ENCODE measurements at regions of chr6 and their contacts with region 1.

Region 1: GRCh38 chr6:143427109-143427817 is 23.2 kb downstream of the ADAT2 start:
- DNase-seq: peak; percentile 76
- CTCF ChIP-seq: peak; percentile 97

Region 2: DNA sequence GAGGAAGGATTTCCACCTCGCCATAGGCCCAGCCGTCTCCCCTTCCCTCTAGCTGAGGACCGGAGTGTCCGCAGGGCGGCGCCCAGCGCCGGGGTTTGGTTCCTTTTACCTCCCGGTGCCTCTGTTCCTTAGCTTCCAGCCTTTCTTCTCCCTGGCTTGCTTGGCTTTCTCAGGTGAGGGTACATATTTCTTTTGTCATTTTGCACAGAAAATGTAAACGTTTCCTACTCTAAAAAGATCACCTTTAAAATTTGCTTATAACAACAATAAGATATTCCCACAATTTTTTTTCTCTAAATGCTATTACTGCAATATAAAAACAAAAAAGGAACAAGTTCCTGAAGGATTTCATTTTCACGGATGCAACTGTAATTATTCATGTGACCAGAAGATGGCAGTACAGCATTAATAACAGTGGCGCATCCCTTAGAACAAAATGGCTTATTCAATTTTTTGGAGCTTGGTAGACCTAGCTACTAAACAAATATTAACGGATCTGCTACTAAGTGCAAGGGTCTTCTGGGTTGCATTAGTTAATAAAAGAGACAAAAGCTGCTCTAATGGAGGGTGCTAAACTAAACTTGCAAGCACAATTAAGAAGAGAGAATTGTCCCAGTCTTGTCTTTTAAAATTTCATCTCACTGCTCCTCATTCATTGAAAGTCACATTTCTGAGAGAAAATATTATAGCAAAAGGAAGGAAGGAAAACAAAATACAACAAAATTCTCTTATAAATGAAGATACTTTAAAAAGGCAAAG is 952.6 kb before region 1 on chr6:
- CTCF ChIA-PET with region 1: interaction called, 43 read pairs
- POLR2A ChIA-PET with region 1: no interaction called
- DNase-seq: peak; percentile 38
- CTCF ChIP-seq: peak; percentile 78

Region 3: DNA sequence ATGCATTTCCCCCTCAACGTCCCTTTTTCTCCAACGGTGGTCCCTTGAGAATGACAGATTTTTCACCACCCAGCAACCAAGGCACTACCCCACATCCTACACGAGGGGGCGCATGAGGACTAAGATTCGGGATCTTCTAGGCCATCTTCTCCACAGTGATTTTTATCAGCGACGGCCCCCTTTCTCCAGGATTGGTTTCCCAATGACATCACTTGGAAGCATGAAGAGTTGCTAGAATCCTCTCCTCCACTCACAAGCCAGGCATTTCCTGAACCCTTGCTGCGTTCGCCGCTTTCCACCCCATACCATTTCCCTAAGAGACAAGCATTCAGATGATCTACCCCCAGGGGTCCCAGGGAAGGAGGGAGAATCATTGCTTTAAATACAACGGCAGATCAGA is 734.3 kb before region 1 on chr6:
- CTCF ChIA-PET with region 1: interaction called, 44 read pairs
- POLR2A ChIA-PET with region 1: no interaction called
- DNase-seq: peak; percentile 41
- CTCF ChIP-seq: peak; percentile 86

Region 4: DNA sequence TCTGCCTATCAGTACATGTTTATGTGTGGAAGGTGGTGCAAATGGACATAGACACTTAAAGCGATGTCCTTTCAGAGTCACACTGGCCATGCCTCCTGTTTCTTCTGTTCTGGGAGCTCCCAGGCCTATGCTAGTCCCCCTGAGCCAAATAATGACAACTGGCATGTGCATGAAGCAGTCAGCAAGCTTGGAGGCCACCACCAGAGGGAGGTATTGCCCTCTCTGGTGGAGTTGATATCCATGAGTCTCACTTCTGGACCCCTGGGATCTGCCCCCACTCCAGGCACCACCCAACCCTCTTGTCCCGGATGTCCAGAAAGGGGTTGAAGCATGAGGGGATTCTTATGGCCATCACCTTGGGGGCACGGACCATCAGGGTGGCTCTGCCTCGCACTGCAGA is 194.4 kb before region 1 on chr6:
- CTCF ChIA-PET with region 1: interaction called, 75 read pairs
- POLR2A ChIA-PET with region 1: no interaction called
- DNase-seq: peak; percentile 52
- CTCF ChIP-seq: peak; percentile 38

Region 5: GRCh38 chr6:143414769-143415168 is 12.5 kb before region 1 on chr6:
- CTCF ChIA-PET with region 1: interaction called, 45 read pairs
- POLR2A ChIA-PET with region 1: no interaction called
- DNase-seq: no peak
- CTCF ChIP-seq: no peak

Region 6: DNA sequence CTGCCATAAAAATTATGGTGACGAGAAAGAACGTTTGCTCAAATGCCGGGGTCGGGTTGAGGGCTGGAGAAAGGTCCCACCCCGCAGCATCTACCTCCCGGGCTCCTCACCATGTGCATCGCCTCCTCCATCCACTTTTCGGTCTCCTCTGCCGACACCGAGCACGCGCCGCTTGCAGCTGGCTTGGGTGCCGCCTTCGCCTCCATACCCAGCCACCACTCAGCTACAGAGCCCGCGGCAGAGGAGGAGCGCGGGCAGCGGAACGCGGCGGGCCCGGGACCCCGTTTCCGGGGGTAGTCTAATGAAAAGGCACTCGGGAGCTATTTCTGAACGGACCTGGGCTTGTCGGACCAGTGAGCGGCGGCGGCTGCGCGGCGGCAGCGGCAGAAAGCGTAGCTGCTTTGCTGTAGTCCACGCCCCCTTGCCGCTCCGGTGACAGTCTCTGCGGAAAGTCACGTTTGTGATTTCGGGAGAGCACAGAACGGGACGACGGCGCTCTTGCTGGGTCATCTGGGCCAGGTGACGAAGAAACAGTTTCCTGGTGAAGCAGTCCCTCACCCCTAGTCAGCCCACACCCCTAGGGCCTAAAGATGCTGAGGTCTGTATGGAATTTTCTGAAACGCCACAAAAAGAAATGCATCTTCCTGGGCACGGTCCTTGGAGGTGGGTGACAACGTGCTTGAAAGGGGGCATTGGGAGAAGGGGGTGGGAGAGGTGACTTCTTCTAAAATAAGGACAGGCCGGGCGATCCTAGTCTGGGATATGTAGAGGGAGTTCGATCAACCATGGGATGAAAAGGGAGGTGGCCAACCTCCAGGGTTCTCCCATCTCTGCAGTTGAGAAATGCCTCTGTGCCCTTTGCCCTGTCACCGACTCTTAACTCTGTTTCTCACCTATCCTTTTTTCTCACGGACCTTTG is 23.4 kb after region 1 on chr6 and contains the starts of genes ADAT2 and PEX3:
- CTCF ChIA-PET with region 1: interaction called, 13 read pairs
- POLR2A ChIA-PET with region 1: no interaction called
- DNase-seq: peak; percentile 92
- CTCF ChIP-seq: no peak